ENCODE measurements at regions of chr2 and their contacts with region 1.

Region 1: GRCh38 chr2:96233880-96234316 is 25.3 kb upstream of the STARD7 start:
- DNase-seq: peak; percentile 70
- ATAC-seq: peak; percentile 98
- H3K4me3 ChIP-seq: no peak overlapping the region
- H3K4me3 Mint-ChIP-seq: peak overlapping the region; percentile 49
- H3K27ac ChIP-seq: no peak overlapping the region
- H3K27ac Mint-ChIP-seq: peak overlapping the region; percentile 88
- H3K4me1 ChIP-seq: peaks cover 15% of the 10 kb centered on the region in 2 donors
- H3K4me1 Mint-ChIP-seq: peaks cover 16% of the 10 kb centered on the region
- H3K27me3 ChIP-seq: no peaks in the 10 kb centered on the region
- H3K27me3 Mint-ChIP-seq: no peaks in the 10 kb centered on the region
- CTCF ChIP-seq: peak; percentile 41

Region 2: DNA sequence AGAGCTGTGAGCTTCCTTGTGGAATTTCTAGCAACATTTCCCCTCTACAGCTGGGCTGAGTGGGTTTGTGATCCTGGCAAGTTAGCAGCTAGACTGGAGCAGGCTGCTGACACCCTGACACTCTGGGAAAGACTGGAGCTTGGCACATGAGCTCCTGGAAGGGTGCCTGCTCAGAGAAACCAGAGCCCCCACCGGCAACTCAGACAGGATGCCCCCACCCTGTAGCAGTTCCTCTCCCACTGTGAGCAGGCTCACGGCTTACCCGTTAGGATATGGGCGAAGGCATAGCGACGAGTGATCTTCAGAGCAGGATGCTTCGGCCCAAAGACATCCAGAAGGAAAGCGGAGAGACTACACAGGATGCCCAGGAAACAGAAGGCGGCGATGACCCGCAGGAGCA is 20.7 kb after region 1 on chr2:
- CTCF ChIA-PET with region 1: interaction called, 39 read pairs
- POLR2A ChIA-PET with region 1: interaction called, 3 read pairs
- intact Hi-C with region 1: no loop called
- DNase-seq: no peak
- ATAC-seq: no peak
- H3K4me3 ChIP-seq: no peak overlapping the region
- H3K4me3 Mint-ChIP-seq: no peak overlapping the region
- H3K27ac ChIP-seq: peak overlapping the region in 1 of 2 donors; percentile 64
- H3K27ac Mint-ChIP-seq: peak overlapping the region; percentile 59
- H3K4me1 ChIP-seq: peaks cover 47 to 53% of the 10 kb centered on the region in 2 donors
- H3K4me1 Mint-ChIP-seq: peaks cover 46% of the 10 kb centered on the region
- H3K27me3 ChIP-seq: no peaks in the 10 kb centered on the region
- H3K27me3 Mint-ChIP-seq: no peaks in the 10 kb centered on the region
- CTCF ChIP-seq: no peak

Region 3: GRCh38 chr2:96260404-96261260 is 26.7 kb after region 1 on chr2:
- CTCF ChIA-PET with region 1: interaction called, 39 read pairs
- POLR2A ChIA-PET with region 1: interaction called, 3 read pairs
- intact Hi-C with region 1: no loop called
- DNase-seq: peak; percentile 62
- ATAC-seq: peak; percentile 55
- H3K4me3 ChIP-seq: no peak overlapping the region
- H3K4me3 Mint-ChIP-seq: peak overlapping the region; percentile 64
- H3K27ac ChIP-seq: peak overlapping the region; percentile 44 to 64
- H3K27ac Mint-ChIP-seq: peak overlapping the region; percentile 92
- H3K4me1 ChIP-seq: peaks cover 65 to 75% of the 10 kb centered on the region in 2 donors
- H3K4me1 Mint-ChIP-seq: peaks cover 78% of the 10 kb centered on the region
- H3K27me3 ChIP-seq: no peaks in the 10 kb centered on the region
- H3K27me3 Mint-ChIP-seq: no peaks in the 10 kb centered on the region
- CTCF ChIP-seq: peak; percentile 29

Measured in B cell (primary cell).